Thyroid gland (tissue), 4 donors: ENCODE measurements at regions of chr1 and their contacts with region 1.

Region 1: GRCh38 chr1:19918057-19918456 is 5.4 kb downstream of the PLA2G2E start:
- DNase-seq: peak; percentile 81 to 85
- H3K4me3 ChIP-seq: no peak overlapping the region
- H3K27ac ChIP-seq: no peak overlapping the region
- H3K4me1 ChIP-seq: no peaks in the 10 kb centered on the region
- H3K27me3 ChIP-seq: no peaks in the 10 kb centered on the region
- CTCF ChIP-seq: peak; percentile 71 to 89 (median 80)
- POLR2A ChIP-seq: no peak

Region 2: DNA sequence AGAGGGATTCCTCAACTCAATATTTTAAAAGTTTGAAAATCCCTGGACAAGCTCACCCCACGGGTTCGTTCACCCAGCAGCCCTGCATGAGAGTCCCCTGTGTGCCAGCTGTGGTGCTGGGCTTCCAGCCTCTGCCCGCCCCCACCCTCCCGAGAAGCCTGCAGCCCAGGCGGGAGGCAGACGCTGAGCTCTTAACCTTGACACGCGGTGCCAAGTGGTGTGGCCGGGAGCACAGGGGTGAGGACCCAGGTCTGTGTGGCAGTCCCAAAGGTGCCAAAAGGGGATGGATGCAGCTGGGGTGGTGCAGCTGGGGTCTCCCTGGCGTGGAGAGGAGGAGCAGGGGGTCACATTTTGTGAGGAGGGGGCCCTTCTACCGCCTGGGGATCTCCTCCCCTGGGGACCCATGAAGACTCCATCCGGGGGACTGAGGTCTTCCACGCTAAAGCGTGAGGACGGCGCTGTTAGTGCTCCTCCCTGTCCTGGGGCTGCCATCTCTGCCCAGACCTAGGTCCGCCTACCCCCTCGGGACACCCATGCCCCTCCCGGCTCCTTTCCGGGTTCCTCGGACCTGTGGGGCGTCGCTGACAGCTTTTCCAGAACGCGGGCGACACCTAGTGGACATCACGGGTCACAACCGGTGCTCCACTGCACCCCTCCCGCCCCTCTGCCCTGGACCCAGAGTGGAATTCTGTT is 234.0 kb after region 1 on chr1:
- intact Hi-C with region 1: loop called (anchors 5 kb)
- DNase-seq: peak; percentile 80 to 86
- H3K4me3 ChIP-seq: peak overlapping the region in 1 of 3 donors; percentile 35
- H3K27ac ChIP-seq: no peak overlapping the region
- H3K4me1 ChIP-seq: peaks cover 4 to 10% of the 10 kb centered on the region in 2 donors
- H3K27me3 ChIP-seq: no peaks in the 10 kb centered on the region
- CTCF ChIP-seq: peak; percentile 72 to 91 (median 90)
- POLR2A ChIP-seq: no peak